PC-9 (cell line): ENCODE measurements at regions of chr17 and their contacts with region 1.

Region 1: DNA sequence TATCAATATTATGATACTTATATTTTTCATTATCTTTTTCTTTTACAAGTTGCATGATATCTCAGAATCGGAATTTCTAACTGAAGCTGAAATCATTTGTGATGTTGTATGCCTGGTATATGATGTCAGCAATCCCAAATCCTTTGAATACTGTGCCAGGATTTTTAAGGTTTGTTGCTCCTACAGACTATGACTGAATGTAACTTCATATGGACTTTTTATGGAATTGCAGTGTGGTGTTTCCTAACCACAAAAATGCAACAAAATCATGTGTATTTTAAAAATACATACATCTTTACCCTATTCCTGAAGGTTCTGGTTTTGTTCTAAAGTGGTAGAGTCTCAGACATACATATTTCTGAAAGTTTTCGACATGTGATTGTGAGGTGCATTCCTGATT is 58.8 kb upstream of the RHBDL3 start:
- DNase-seq: no peak
- H3K4me3 ChIP-seq: no peak overlapping the region
- H3K27ac ChIP-seq: peak overlapping the region; percentile 55; the same call in 1 of the 2 replicates
- H3K4me1 ChIP-seq: peaks cover 10% of the 10 kb centered on the region
- H3K27me3 ChIP-seq: no peaks in the 10 kb centered on the region
- CTCF ChIP-seq: no peak

Region 2: GRCh38 chr17:31907342-31907962 is 299.4 kb before region 1 on chr17:
- CTCF ChIA-PET with region 1: interaction called, 11 read pairs
- POLR2A ChIA-PET with region 1: no interaction called
- intact Hi-C with region 1: no loop called
- DNase-seq: no peak
- H3K4me3 ChIP-seq: no peak overlapping the region
- H3K27ac ChIP-seq: no peak overlapping the region
- H3K4me1 ChIP-seq: no peaks in the 10 kb centered on the region; the same call in 1 of the 2 replicates
- H3K27me3 ChIP-seq: no peaks in the 10 kb centered on the region
- CTCF ChIP-seq: no peak

Region 3: GRCh38 chr17:31967648-31968047 is 239.2 kb before region 1 on chr17:
- CTCF ChIA-PET with region 1: no interaction called
- POLR2A ChIA-PET with region 1: interaction called, 11 read pairs
- intact Hi-C with region 1: no loop called
- DNase-seq: no peak
- H3K4me3 ChIP-seq: no peak overlapping the region
- H3K27ac ChIP-seq: no peak overlapping the region
- H3K4me1 ChIP-seq: no peaks in the 10 kb centered on the region
- H3K27me3 ChIP-seq: no peaks in the 10 kb centered on the region
- CTCF ChIP-seq: no peak

Region 4: GRCh38 chr17:32187276-32187675 is 19.6 kb before region 1 on chr17:
- CTCF ChIA-PET with region 1: no interaction called
- POLR2A ChIA-PET with region 1: interaction called, 16 read pairs
- intact Hi-C with region 1: no loop called
- DNase-seq: no peak
- H3K4me3 ChIP-seq: no peak overlapping the region
- H3K27ac ChIP-seq: no peak overlapping the region
- H3K4me1 ChIP-seq: peaks cover 14% of the 10 kb centered on the region
- H3K27me3 ChIP-seq: no peaks in the 10 kb centered on the region
- CTCF ChIP-seq: no peak